Dendritic cell treated with granulocyte-macrophage colony-stimulating factor and Interleukin-4, amounts not matched to agents 40 ng/mL and 50 ng/mL, for 4 days (primary cell): ENCODE measurements at regions of chr2 and their contacts with region 1.

Region 1: GRCh38 chr2:9205963-9206948 is at the start of gene ASAP2:
- H3K4me3 Mint-ChIP-seq: peak within 1 kb of the TSS; percentile 77
- H3K27ac Mint-ChIP-seq: peak within 1 kb of the TSS; percentile 82
- H3K4me1 Mint-ChIP-seq: peaks cover 8% of the 10 kb centered on the region
- H3K27me3 Mint-ChIP-seq: peaks cover 26% of the 10 kb centered on the region

Region 2: GRCh38 chr2:9165625-9166024 is 40.6 kb before region 1 on chr2:
- intact Hi-C with region 1: loop called (anchors 5 kb)
- H3K4me3 Mint-ChIP-seq: no peak overlapping the region
- H3K27ac Mint-ChIP-seq: peak overlapping the region; percentile 3
- H3K4me1 Mint-ChIP-seq: peaks cover 52% of the 10 kb centered on the region
- H3K27me3 Mint-ChIP-seq: no peaks in the 10 kb centered on the region

Region 3: GRCh38 chr2:9333591-9334171 is 127.4 kb after region 1 on chr2:
- intact Hi-C with region 1: loop called (anchors 5 kb)
- H3K4me3 Mint-ChIP-seq: no peak overlapping the region
- H3K27ac Mint-ChIP-seq: peak overlapping the region; percentile 13
- H3K4me1 Mint-ChIP-seq: peaks cover 44% of the 10 kb centered on the region
- H3K27me3 Mint-ChIP-seq: no peaks in the 10 kb centered on the region

Region 4: GRCh38 chr2:10157293-10157692 is 951.0 kb after region 1 on chr2:
- intact Hi-C with region 1: no loop called
- H3K4me3 Mint-ChIP-seq: no peak overlapping the region
- H3K27ac Mint-ChIP-seq: no peak overlapping the region
- H3K4me1 Mint-ChIP-seq: no peaks in the 10 kb centered on the region
- H3K27me3 Mint-ChIP-seq: no peaks in the 10 kb centered on the region